CD4-positive, alpha-beta memory T cell (primary cell): ENCODE measurements at regions of chr20 and their contacts with region 1.

Region 1: GRCh38 chr20:62953839-62954703 is 1.6 kb downstream of the SLC17A9 start:
- DNase-seq: peak; percentile 74 to 85 (median 77)
- H3K4me3 ChIP-seq: peak overlapping the region; percentile 17 to 27
- H3K4me3 Mint-ChIP-seq: peak overlapping the region; percentile 72 to 93 (median 83)
- H3K27ac ChIP-seq: peak overlapping the region; percentile 57
- H3K27ac Mint-ChIP-seq: peak overlapping the region; percentile 92 to 95 (median 93)
- H3K4me1 ChIP-seq: peaks cover 28% of the 10 kb centered on the region
- H3K4me1 Mint-ChIP-seq: peaks cover 11 to 31% (median 24%) of the 10 kb centered on the region in 4 donors
- H3K27me3 ChIP-seq: no peaks in the 10 kb centered on the region
- H3K27me3 Mint-ChIP-seq: no peaks in the 10 kb centered on the region

Region 2: GRCh38 chr20:62907384-62908317 is 46.4 kb before region 1 on chr20:
- CTCF ChIA-PET with region 1: interaction called, 21 read pairs
- POLR2A ChIA-PET with region 1: interaction called, 14 read pairs
- intact Hi-C with region 1: no loop called
- DNase-seq: peak in 2 of 5 donors; percentile 31 to 36
- H3K4me3 ChIP-seq: no peak overlapping the region
- H3K4me3 Mint-ChIP-seq: no peak overlapping the region
- H3K27ac ChIP-seq: no peak overlapping the region
- H3K27ac Mint-ChIP-seq: peak overlapping the region in 5 of 7 donors; percentile 29 to 68 (median 42)
- H3K4me1 ChIP-seq: no peaks in the 10 kb centered on the region
- H3K4me1 Mint-ChIP-seq: peaks cover 10 to 37% (median 16%) of the 10 kb centered on the region in 4 donors
- H3K27me3 ChIP-seq: no peaks in the 10 kb centered on the region
- H3K27me3 Mint-ChIP-seq: no peaks in the 10 kb centered on the region

Region 3: DNA sequence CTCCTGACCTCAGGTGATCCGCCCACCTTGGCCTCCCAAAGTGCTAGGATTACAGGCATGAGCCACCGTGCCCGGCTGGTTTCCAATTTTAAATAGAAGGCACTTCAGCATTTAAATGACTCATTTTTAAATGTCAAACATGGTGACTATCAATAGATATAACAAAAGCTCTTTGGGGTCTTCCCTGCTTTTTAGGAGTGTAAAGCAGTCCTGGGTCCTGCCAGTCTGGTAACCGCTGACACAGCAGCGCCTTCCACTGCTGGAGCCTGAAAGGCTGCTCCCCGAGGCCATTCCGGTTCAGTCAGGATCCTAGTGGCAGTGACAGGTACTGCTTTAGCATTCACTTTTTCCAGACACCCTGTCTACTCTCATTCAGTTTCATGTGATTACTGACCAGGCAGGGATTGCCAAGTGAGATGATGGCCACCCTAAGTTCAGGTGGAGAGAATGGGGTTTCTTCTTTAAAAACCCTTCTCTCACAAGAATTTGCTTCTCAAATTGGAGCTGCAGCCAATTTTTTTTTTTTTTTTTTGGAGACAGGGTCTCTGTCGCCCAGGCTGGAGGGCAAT is 32.9 kb before region 1 on chr20:
- CTCF ChIA-PET with region 1: interaction called, 7 read pairs
- POLR2A ChIA-PET with region 1: interaction called, 37 read pairs
- intact Hi-C with region 1: loop called (anchors 1 kb)
- DNase-seq: peak; percentile 58 to 85 (median 62)
- H3K4me3 ChIP-seq: no peak overlapping the region
- H3K4me3 Mint-ChIP-seq: peak overlapping the region; percentile 72 to 92 (median 87)
- H3K27ac ChIP-seq: peak overlapping the region; percentile 36
- H3K27ac Mint-ChIP-seq: peak overlapping the region; percentile 82 to 95 (median 89)
- H3K4me1 ChIP-seq: peaks cover 90% of the 10 kb centered on the region
- H3K4me1 Mint-ChIP-seq: peaks cover 61 to 93% (median 77%) of the 10 kb centered on the region in 4 donors
- H3K27me3 ChIP-seq: no peaks in the 10 kb centered on the region
- H3K27me3 Mint-ChIP-seq: no peaks in the 10 kb centered on the region

Region 4: GRCh38 chr20:62926239-62927104 is 27.6 kb before region 1 on chr20 and contains the start of gene DIDO1:
- CTCF ChIA-PET with region 1: interaction called, 5 read pairs
- POLR2A ChIA-PET with region 1: interaction called, 37 read pairs
- intact Hi-C with region 1: loop called (anchors 1 kb)
- DNase-seq: peak; percentile 88 to 91 (median 90)
- H3K4me3 ChIP-seq: peak within 1 kb of the TSS; percentile 87 to 88
- H3K4me3 Mint-ChIP-seq: peak within 1 kb of the TSS; percentile 91 to 97 (median 96)
- H3K27ac ChIP-seq: peak within 1 kb of the TSS; percentile 91
- H3K27ac Mint-ChIP-seq: peak within 1 kb of the TSS; percentile 89 to 97 (median 94)
- H3K4me1 ChIP-seq: peaks cover 78% of the 10 kb centered on the region
- H3K4me1 Mint-ChIP-seq: peaks cover 37 to 89% (median 63%) of the 10 kb centered on the region in 4 donors
- H3K27me3 ChIP-seq: no peaks in the 10 kb centered on the region
- H3K27me3 Mint-ChIP-seq: no peaks in the 10 kb centered on the region
- total RNA-seq, gene DIDO1: 127 to 129 TPM

Region 5: DNA sequence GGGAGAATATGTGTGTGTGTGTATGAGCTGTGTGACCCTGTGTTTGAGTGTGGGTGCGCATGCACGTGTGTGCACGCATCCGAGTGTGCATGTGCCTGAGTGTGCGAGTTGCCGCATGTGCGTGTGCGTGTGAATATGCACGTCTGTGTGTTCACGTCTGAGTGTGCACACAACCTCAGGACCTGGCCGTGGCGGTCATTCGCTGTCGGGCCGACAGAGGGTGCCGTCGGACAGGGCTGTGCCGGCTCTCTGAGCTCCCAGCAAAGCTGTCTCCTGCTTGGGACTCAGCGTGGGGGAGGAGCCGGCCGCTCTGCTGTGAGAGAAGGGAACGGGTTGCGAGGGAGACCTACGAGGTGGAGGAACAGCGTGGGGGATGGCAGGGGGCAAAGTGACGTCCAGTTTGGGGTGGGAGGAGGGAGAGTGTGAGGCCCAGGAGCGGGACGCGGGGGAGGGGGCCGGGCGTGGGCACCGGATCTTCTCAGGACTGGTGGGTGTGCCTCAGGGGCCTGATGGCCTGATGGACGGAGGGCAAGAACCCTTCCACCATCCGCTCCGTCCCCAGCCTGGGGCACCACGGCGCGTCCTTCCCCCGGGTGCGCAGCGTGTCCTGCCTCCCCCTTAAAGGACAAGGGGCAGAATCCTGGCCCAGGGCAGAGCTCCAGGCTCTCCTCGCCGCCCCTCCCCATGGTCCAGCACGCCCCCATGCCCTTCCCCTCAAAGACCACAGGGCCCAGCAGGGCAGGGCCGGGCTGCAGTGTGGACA is 18.4 kb after region 1 on chr20:
- CTCF ChIA-PET with region 1: interaction called, 12 read pairs
- POLR2A ChIA-PET with region 1: interaction called, 6 read pairs
- intact Hi-C with region 1: loop called (anchors 2 kb)
- DNase-seq: peak; percentile 78 to 83 (median 80)
- H3K4me3 ChIP-seq: no peak overlapping the region
- H3K4me3 Mint-ChIP-seq: peak overlapping the region; percentile 64 to 92 (median 75)
- H3K27ac ChIP-seq: no peak overlapping the region
- H3K27ac Mint-ChIP-seq: peak overlapping the region in 3 of 7 donors; percentile 17 to 86 (median 23)
- H3K4me1 ChIP-seq: peaks cover 12% of the 10 kb centered on the region
- H3K4me1 Mint-ChIP-seq: peaks cover 11 to 29% (median 15%) of the 10 kb centered on the region in 4 donors
- H3K27me3 ChIP-seq: peaks cover 6% of the 10 kb centered on the region
- H3K27me3 Mint-ChIP-seq: peaks cover 27 to 28% of the 10 kb centered on the region in 2 donors

Region 6: DNA sequence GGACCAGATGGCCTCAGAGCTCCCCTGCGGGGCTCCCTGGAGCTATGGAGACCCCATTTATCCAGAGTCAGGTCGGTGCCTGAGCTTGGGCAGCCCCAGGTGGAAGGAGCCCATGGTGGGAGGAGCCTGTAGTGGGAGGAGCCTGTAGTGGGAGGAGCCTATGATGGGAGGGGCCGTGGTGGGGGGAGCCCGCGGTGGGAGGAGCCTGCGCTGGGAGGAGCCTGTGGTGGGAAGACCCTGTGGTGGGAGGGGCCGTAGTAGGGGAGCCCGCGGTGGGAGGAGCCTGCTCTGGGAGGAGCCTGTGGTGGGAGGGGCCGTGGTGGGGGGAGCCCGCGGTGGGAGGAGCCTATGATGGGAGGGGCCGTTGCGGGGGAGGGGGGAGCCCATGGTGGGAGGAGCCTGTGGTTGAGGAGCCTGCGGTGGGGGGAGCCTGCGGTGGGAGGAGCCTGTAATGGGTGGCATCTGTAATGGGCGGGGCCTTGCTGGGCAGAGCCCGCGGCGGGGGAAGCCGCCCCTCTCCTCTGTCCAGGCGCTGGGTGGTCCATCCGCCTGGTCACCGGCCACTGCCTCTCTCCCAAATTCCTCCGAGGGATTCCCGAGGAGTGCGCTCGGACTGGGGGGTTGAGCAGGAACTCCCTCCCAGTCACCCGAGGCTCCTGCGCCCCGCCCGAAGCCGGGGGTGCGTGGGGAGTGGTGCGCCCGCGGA is 599.3 kb after region 1 on chr20:
- CTCF ChIA-PET with region 1: no interaction called
- POLR2A ChIA-PET with region 1: no interaction called
- intact Hi-C with region 1: no loop called
- DNase-seq: peak; percentile 87 to 93 (median 89)
- H3K4me3 ChIP-seq: peak overlapping the region; percentile 23 to 66
- H3K4me3 Mint-ChIP-seq: peak overlapping the region; percentile 68 to 92 (median 76)
- H3K27ac ChIP-seq: peak overlapping the region; percentile 69
- H3K27ac Mint-ChIP-seq: peak overlapping the region; percentile 93 to 98 (median 97)
- H3K4me1 ChIP-seq: peaks cover 22% of the 10 kb centered on the region
- H3K4me1 Mint-ChIP-seq: peaks cover 5 to 27% (median 14%) of the 10 kb centered on the region in 4 donors
- H3K27me3 ChIP-seq: no peaks in the 10 kb centered on the region
- H3K27me3 Mint-ChIP-seq: peaks cover 0 to 6% of the 10 kb centered on the region in 2 donors